IMR-90 (cell line): ENCODE measurements at regions of chr15 and their contacts with region 1.

Region 1: DNA sequence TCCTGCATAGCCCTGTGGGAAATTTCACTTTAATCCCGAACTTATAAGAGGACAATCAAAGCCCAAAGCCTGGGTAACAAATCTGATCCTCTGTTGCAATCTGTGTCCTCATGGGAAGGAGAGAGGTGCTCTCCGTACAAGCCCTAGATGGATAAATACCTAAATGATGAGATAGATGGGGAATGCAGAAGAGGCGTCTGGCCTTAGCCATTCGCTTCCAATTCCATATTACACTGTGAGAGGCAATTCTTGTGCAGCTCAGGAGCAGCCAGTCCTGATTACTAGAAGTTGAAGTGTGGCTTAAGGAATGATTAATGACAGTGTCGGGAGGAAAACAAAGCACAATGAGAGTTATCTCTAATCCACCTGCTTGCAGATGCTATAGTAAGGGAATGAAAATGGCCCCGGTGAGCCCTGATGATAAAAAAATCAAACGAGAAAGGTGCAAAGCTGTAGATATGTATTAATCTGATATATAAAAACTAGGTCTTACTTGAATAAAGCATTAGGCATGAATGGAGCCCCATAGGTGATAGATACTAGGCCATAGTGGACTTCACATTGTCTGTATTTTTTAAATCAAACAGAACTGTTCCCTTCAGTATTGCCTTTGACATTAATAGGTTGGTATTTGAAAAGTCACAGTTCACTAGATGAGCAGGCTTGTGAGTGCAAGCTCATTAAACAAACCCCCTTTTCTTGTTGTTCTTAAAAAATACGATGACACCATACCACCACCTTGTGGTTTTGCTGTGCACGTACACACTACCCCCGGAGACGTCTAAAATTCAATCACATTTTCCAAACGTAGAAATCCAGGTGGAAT is 54.2 kb upstream of the TMCO5A start:
- DNase-seq: peak; percentile 75
- ATAC-seq: peak; percentile 76
- H3K4me3 ChIP-seq: no peak overlapping the region
- H3K27ac ChIP-seq: no peak overlapping the region
- H3K4me1 ChIP-seq: peaks cover 12% of the 10 kb centered on the region
- H3K27me3 ChIP-seq: no peaks in the 10 kb centered on the region
- CTCF ChIP-seq: peak; percentile 86
- POLR2A ChIP-seq: no peak
- RAD21 ChIP-seq: peak; percentile 87

Region 2: GRCh38 chr15:36567445-36567844 is 1312.8 kb before region 1 on chr15:
- CTCF ChIA-PET with region 1: no interaction called
- POLR2A ChIA-PET with region 1: no interaction called
- dilution Hi-C with region 1: no loop called
- in situ Hi-C with region 1: no loop called
- intact Hi-C with region 1: no loop called
- DNase-seq: no peak
- ATAC-seq: no peak
- H3K4me3 ChIP-seq: no peak overlapping the region
- H3K27ac ChIP-seq: no peak overlapping the region
- H3K4me1 ChIP-seq: no peaks in the 10 kb centered on the region
- H3K27me3 ChIP-seq: no peaks in the 10 kb centered on the region
- CTCF ChIP-seq: no peak
- POLR2A ChIP-seq: no peak
- RAD21 ChIP-seq: no peak

Region 3: GRCh38 chr15:37289109-37289765 is 591.0 kb before region 1 on chr15:
- CTCF ChIA-PET with region 1: no interaction called
- POLR2A ChIA-PET with region 1: no interaction called
- dilution Hi-C with region 1: no loop called
- in situ Hi-C with region 1: no loop called
- intact Hi-C with region 1: loop called (anchors 1 kb)
- DNase-seq: peak; percentile 5
- ATAC-seq: no peak; the same call in 1 of the 2 replicates
- H3K4me3 ChIP-seq: no peak overlapping the region
- H3K27ac ChIP-seq: no peak overlapping the region
- H3K4me1 ChIP-seq: no peaks in the 10 kb centered on the region
- H3K27me3 ChIP-seq: no peaks in the 10 kb centered on the region
- CTCF ChIP-seq: peak; percentile 29; the same call in 1 of the 2 replicates
- POLR2A ChIP-seq: no peak
- RAD21 ChIP-seq: peak; percentile 37

Region 4: DNA sequence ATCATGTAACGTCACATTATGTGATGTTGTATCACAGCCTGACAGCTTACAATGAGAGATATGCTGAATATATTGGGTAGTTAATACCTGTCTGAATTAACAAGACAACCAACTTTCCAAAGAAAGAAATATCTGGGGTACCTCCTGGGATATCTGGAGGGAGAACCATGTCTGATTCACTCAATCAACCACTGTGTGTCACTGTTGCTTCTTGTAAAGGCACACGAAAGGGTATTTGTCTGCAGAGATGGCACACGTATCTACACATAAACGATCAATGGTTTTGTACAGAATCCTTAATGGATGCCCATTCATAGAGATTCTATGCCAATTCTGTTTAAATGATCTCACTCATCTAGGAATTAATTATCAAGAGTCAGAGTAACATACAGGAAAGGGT is 197.9 kb before region 1 on chr15:
- CTCF ChIA-PET with region 1: no interaction called
- POLR2A ChIA-PET with region 1: no interaction called
- dilution Hi-C with region 1: no loop called
- in situ Hi-C with region 1: no loop called
- intact Hi-C with region 1: loop called (anchors 2 kb)
- DNase-seq: peak; percentile 27
- ATAC-seq: peak; percentile 42; the same call in 1 of the 2 replicates
- H3K4me3 ChIP-seq: no peak overlapping the region
- H3K27ac ChIP-seq: no peak overlapping the region
- H3K4me1 ChIP-seq: no peaks in the 10 kb centered on the region
- H3K27me3 ChIP-seq: no peaks in the 10 kb centered on the region
- CTCF ChIP-seq: peak; percentile 36
- POLR2A ChIP-seq: no peak
- RAD21 ChIP-seq: peak; percentile 52

Region 5: GRCh38 chr15:37764733-37765191 is 115.5 kb before region 1 on chr15:
- CTCF ChIA-PET with region 1: interaction called, 4 read pairs
- POLR2A ChIA-PET with region 1: no interaction called
- dilution Hi-C with region 1: no loop called
- in situ Hi-C with region 1: loop called (anchors 10 kb)
- intact Hi-C with region 1: loop called (anchors 1 kb)
- DNase-seq: peak; percentile 74
- ATAC-seq: peak; percentile 92
- H3K4me3 ChIP-seq: no peak overlapping the region
- H3K27ac ChIP-seq: no peak overlapping the region
- H3K4me1 ChIP-seq: 0 out of 2 replicates have a peak, but pooled peaks cover 2% of the 10 kb centered on the region
- H3K27me3 ChIP-seq: no peaks in the 10 kb centered on the region
- CTCF ChIP-seq: peak; percentile 73
- POLR2A ChIP-seq: no peak
- RAD21 ChIP-seq: peak; percentile 69